ENCODE measurements at regions of chr13 and their contacts with region 1.

Region 1: DNA sequence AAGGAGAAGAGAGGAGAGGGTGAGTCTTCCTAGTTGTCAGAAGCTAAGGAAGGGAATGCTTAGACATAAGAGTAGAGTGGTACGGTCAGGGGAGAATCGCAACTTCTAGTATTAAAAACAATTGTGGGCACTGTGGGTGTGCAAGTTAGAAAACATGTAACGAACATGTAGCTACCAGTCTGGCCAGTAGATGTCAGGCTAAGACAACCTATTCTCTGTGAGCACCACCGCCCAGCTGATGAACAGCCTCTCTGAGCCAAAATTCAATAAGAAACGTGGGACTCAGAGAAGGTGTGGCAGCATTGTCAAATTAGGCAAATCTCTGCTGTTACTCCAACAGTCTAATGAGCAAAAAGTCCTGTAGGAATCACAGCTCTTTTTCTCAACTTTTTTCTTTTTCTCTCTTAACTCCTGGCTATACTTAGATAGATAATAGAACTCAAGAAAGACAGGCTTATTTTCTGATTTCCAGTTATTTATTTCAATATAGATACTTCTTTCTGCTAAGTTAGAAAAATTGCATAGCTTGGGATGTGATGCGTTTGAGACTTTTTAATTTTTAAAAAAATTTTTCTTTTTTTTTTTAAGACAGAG is 186.2 kb downstream of the USP12 start:
- DNase-seq: peak; percentile 87
- H3K4me3 ChIP-seq: no peak overlapping the region
- H3K27ac ChIP-seq: peak overlapping the region; percentile 82 to 88 (median 85)
- H3K4me1 ChIP-seq: peaks cover 0 to 65% (median 56%) of the 10 kb centered on the region in 4 donors
- H3K27me3 ChIP-seq: no peaks in the 10 kb centered on the region
- CTCF ChIP-seq: peak; percentile 68 to 86 (median 71)
- EP300 ChIP-seq: no peak
- POLR2A ChIP-seq: no peak

Region 2: DNA sequence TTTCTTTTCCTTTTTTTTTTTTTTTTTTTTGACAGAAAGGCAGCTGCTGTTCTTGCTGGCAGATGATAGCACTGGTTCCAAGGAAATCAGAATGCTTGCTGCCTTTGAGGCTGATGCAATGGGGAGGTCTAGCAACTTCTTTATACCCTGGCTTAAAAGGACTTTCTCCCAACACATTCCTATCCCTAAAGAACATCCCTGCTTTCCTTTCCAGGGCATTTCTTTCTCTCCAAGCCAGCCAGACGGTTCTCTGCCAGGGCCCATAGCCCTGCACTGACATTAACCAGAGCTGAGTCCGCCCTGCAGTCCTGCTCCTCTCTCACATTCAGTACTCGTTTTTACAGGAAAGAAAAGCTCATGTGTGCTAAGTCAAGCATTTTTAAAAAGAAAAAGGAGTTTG is 561.8 kb before region 1 on chr13:
- intact Hi-C with region 1: loop called (anchors 5 kb)
- DNase-seq: peak; percentile 92
- H3K4me3 ChIP-seq: peak overlapping the region in 3 of 4 donors; percentile 3 to 20 (median 3)
- H3K27ac ChIP-seq: peak overlapping the region; percentile 85 to 92 (median 88)
- H3K4me1 ChIP-seq: peaks cover 0 to 77% (median 62%) of the 10 kb centered on the region in 4 donors
- H3K27me3 ChIP-seq: no peaks in the 10 kb centered on the region
- CTCF ChIP-seq: no peak
- EP300 ChIP-seq: peak; percentile 43 to 90 (median 66)
- POLR2A ChIP-seq: no peak

Region 3: DNA sequence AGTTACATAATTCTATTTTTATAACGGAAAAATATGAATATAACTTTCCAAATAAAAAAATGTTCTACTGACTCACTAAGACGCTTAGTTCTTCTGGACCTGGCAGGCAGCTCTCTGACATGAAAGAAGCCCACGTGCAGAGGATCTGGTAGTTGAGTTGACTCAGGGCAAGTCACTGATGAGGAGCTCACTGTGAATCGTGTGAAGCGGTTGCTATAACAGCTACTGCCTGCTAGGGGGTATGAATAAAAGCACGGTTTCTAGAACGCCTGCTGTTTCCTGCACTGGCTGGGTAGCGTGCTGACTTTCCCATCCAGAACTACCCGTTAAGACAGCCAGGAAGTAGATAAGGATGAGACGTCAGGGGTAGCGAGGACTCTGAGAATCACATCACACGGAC is 482.6 kb before region 1 on chr13:
- intact Hi-C with region 1: no loop called
- DNase-seq: peak; percentile 80
- H3K4me3 ChIP-seq: no peak overlapping the region
- H3K27ac ChIP-seq: no peak overlapping the region
- H3K4me1 ChIP-seq: no peaks in the 10 kb centered on the region
- H3K27me3 ChIP-seq: no peaks in the 10 kb centered on the region
- CTCF ChIP-seq: no peak
- EP300 ChIP-seq: no peak
- POLR2A ChIP-seq: no peak

Region 4: GRCh38 chr13:27022571-27023311 is 37.4 kb after region 1 on chr13:
- intact Hi-C with region 1: loop called (anchors 2 kb)
- DNase-seq: peak; percentile 85
- H3K4me3 ChIP-seq: no peak overlapping the region
- H3K27ac ChIP-seq: peak overlapping the region; percentile 73 to 85 (median 82)
- H3K4me1 ChIP-seq: peaks cover 0 to 70% (median 59%) of the 10 kb centered on the region in 4 donors
- H3K27me3 ChIP-seq: peaks cover 0 to 3% (median 0%) of the 10 kb centered on the region in 3 donors
- CTCF ChIP-seq: no peak
- EP300 ChIP-seq: peak; percentile 35 to 89 (median 66)
- POLR2A ChIP-seq: no peak

Region 5: DNA sequence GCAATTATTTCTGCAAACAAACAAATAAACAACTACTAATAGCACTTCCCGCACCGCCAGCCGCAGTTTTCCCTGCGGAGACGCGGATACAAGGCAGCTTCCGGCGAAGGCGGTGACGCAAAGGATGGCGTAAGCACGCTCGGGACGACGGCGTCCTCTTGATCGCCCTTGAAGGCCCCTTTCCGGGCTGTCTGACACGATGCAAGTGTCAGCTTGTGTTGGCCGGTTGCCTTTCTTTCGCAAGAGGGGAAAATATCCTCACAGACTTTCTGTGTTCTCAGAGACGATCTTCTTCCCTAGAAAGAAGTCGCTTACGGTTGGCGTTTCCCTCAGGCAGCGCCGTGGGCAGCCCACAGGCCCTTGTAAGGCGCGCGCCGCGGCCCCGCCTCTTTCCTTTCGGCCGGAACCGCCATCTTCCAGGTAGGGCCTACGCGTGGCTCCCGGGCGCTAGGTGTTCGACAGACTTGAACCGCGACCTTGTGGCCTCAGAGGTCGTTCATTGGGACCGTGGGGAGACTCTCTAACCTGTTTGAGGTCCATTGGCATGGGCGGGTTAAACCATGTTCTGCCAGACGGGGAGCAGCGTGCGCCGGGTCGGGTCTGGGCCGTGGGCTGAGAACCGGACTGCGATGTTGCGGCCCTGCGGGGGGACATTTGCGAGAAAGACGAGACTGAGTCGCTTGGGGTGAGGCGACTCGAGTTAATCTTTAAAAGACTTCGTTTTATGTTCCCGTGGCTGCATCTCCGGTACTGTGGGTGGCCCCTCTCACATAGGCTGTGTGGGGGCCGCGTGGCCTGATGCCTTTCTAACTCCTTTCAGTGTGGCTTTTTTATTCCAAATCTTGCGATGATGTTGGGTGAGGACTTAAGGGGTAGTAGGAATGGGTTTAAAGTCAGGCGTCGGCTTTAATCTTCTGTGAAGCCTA is 266.0 kb after region 1 on chr13 and contains the start of gene RPL21:
- intact Hi-C with region 1: loop called (anchors 5 kb)
- DNase-seq: peak; percentile 98
- H3K4me3 ChIP-seq: peak within 1 kb of the TSS; percentile 62 to 86 (median 68)
- H3K27ac ChIP-seq: peak within 1 kb of the TSS; percentile 88 to 96 (median 92)
- H3K4me1 ChIP-seq: peaks cover 0 to 44% (median 36%) of the 10 kb centered on the region in 4 donors
- H3K27me3 ChIP-seq: no peaks in the 10 kb centered on the region
- CTCF ChIP-seq: no peak
- EP300 ChIP-seq: peak in 3 of 4 donors; percentile 25 to 87 (median 86)
- POLR2A ChIP-seq: peak; percentile 84 to 91
- total RNA-seq, gene RPL21: 708 to 2,145 (median 1,875) TPM

Region 6: GRCh38 chr13:27362064-27362883 is 376.9 kb after region 1 on chr13:
- intact Hi-C with region 1: loop called (anchors 1 kb)
- DNase-seq: peak; percentile 91
- H3K4me3 ChIP-seq: peak overlapping the region; percentile 18 to 54 (median 46)
- H3K27ac ChIP-seq: peak overlapping the region in 1 of 4 donors; percentile 37
- H3K4me1 ChIP-seq: peaks cover 0 to 17% (median 12%) of the 10 kb centered on the region in 4 donors
- H3K27me3 ChIP-seq: peaks cover 0 to 7% (median 0%) of the 10 kb centered on the region in 3 donors
- CTCF ChIP-seq: peak; percentile 75 to 91 (median 84)
- EP300 ChIP-seq: no peak
- POLR2A ChIP-seq: no peak

Region 7: DNA sequence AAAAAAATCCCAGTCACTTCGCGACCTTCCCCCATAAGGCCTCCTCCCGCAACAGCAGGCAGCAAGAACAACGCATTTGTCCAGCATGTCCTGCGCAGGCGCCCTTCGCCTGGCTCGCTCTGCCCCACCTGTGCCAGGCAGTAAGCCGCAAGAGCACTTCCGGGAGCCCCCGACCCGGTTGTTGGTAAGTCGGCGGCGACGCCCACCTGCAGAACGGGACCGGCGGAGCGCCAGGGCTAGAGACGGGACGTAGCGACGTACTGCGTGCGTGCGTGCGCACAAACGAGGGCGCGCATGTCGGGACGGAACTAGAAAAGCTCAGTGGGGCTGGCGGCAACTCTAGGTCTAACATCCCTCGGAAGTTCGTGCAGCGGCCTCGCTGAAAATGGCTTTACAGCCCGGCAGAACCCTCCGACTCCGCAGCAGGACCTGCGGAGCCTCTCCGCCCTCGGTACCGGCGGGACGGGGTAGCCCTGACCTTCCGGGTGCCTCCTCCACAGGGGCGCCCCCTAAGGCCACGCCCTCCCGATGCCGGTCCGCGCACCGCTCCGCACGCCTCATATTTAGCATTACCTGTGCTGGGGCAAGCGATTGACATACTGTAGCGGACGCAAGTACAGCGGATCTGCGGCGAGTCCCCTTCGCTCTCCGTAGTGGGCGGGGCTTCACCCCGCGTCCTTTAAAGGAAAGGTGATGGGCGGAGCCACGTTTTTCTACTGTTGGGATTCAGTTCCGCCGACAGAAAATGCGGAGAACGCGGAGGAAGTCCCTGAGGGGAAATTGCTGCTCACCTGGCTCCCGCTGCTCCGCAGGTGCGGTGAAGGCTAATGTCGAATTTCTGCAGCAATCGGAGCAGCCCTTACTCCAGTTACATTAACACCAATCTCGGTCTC is 464.8 kb after region 1 on chr13 and contains the start of gene MTIF3:
- intact Hi-C with region 1: loop called (anchors 5 kb)
- DNase-seq: peak; percentile 96
- H3K4me3 ChIP-seq: peak within 1 kb of the TSS; percentile 68 to 98 (median 90)
- H3K27ac ChIP-seq: peak within 1 kb of the TSS; percentile 95 to 100 (median 98)
- H3K4me1 ChIP-seq: peaks cover 0 to 45% (median 28%) of the 10 kb centered on the region in 4 donors
- H3K27me3 ChIP-seq: no peaks in the 10 kb centered on the region
- CTCF ChIP-seq: peak in 1 of 4 experiments; percentile 32
- EP300 ChIP-seq: peak in 1 of 4 donors; percentile 16
- POLR2A ChIP-seq: peak; percentile 78 to 84
- total RNA-seq, gene MTIF3: 64.3 to 102 (median 74.4) TPM

Region 8: DNA sequence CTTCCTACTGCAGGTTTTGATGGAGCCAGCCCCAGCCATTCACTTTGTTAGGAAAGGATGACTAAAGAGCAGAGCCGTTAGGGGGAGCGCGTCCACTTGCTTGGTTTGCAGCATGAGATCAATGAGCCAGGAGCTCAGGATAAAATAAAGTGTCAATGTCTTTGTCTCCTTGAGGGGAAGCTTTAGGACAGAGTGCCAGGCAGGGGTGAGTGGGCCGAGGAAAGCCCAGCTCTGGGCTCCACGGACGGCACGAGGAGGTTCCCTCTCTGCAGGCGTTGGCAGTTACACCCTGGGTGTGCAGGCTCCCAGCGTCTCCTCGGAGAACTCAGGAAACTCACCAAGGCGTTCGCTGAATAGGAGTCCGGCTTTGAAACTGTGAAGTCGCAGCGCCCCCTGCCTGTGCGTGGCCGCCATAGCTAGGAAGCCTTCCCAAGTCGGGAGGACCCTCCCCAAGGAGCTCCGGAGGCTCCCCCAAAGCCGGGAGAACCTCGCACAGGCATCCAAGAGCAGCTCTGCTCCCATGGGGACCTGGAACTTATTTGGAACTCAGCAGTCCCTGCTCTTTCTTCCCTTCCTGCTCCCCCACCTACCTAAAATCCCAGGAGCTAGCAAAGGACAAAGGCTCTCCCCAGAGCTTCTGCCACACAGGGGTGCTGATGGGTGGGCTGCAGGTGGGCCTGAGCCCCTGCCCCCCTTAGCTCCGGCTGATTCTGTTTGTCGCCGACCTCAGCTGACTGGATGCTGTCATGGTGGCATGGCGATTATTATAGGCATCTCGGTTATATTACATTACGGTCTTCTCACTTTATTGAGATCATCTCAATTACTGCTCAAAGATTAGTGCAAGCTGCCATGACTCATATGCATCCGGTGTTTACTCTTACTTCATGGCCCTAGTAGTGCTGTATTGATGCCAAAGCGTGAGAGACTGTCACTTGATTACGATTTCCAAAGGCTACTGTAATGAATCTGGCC is 841.3 kb after region 1 on chr13:
- intact Hi-C with region 1: loop called (anchors 2 kb)
- DNase-seq: peak; percentile 86
- H3K4me3 ChIP-seq: peak overlapping the region in 3 of 4 donors; percentile 5 to 28 (median 9)
- H3K27ac ChIP-seq: no peak overlapping the region
- H3K4me1 ChIP-seq: peaks cover 0 to 15% (median 6%) of the 10 kb centered on the region in 4 donors
- H3K27me3 ChIP-seq: peaks cover 1 to 72% (median 27%) of the 10 kb centered on the region in 3 donors
- CTCF ChIP-seq: peak; percentile 75 to 94 (median 92)
- EP300 ChIP-seq: no peak
- POLR2A ChIP-seq: no peak